Activated CD8-positive, alpha-beta T cell treated with anti-CD3 and anti-CD28 coated beads, Interleukin-2, amount 10 ng/mL, durations not matched to agents 7 days and 5 days (primary cell): ENCODE measurements at regions of chr17 and their contacts with region 1.

Region 1: DNA sequence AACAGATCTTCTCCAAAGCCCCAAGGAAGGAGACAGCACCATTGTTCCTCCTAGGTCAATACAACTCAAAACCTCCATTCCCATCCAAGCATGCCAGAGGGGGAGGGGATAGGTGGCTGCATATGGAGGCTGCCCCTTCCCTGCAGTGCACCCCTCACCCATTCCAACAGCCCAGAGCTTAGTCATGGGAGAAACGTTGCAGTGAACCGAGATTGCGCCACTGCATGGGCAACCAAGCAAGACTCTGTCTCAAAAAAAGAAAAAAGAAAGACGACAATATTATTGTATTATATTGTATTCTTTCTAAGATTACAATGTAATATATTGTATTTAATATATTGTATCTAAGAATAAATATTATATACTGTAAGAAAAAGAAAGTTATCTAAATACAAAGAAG is 36.4 kb upstream of the CD300E start:
- DNase-seq: no peak
- ATAC-seq: no peak
- H3K4me3 Mint-ChIP-seq: no peak overlapping the region
- H3K27ac Mint-ChIP-seq: no peak overlapping the region
- H3K4me1 Mint-ChIP-seq: peaks cover 5% of the 10 kb centered on the region
- H3K27me3 Mint-ChIP-seq: peaks cover 56% of the 10 kb centered on the region

Region 2: DNA sequence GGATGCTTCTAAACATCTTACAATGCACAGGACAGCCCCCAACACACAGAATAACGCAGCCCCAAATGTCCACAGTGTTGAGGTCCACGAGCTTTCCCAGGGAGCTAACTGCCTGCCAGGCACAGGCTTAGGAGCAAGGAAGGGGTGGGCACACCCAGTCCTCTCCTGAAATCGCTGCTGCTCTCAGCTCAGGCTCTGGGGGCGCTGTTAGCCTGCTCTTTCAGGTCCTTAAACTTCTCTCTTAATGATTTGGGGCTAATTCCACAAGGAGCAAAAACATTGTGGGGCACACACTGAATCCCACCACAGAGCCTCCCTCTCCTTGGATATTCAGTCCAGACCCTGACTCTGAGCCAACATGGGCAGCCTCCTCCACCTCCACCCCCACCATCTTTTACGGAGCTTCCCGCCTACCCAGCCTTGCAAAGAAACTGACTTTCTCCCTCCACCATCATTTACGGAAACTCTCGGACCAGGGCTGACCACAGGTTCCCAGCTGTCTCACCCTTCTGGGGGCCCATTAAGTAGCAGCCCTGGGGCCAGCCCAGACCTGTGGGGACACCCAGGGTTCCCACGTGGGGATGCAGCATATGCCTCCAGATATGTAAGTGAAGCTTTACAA is 93.7 kb before region 1 on chr17:
- CTCF ChIA-PET with region 1: interaction called, 16 read pairs
- POLR2A ChIA-PET with region 1: no interaction called
- DNase-seq: peak; percentile 53
- ATAC-seq: peak; percentile 66
- H3K4me3 Mint-ChIP-seq: no peak overlapping the region
- H3K27ac Mint-ChIP-seq: no peak overlapping the region
- H3K4me1 Mint-ChIP-seq: peaks cover 15% of the 10 kb centered on the region
- H3K27me3 Mint-ChIP-seq: peaks cover 36% of the 10 kb centered on the region

Region 3: DNA sequence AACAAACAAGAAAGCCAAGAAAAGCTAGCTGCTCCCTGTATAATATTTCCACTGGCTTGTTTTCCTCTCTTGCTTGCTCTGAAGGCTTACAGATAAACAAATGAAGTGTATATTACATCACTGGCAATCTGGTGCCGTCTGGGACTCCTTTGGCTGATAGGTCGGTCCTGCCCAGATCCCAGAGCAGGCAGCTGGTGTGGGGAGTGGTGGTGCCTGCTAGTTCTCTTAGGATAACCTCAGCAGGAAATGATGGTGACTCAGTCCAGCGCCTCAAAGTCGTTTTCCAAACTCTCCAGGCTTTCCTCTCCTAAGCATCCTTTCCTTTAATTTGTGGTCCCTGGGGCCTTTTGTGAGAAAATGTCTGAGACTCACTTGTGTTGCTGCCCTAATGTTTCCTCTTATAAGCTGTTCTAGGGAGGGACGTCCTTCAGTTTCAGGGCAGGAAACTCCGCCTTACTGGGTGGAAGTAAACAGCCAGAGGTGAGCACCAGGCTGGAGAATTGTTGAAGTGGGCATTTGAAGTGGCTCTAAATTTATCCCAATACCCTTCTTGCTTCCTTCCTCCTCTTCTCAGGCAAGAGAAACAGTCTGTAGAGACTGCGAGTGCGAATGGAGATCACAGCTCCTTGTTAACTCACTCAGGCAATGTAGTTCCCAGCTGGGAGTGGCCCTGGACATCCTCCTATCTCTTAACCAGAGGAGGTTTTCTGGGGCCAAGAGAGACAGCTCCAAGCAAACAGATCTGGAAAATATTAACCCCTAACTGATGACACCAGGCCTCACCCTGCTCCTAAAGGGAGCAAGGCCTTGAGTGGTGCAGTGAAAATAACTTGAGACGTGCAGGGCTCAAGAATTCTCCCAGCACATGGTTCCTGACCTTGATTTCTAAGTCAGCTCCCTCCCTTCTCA is 17.9 kb after region 1 on chr17:
- CTCF ChIA-PET with region 1: interaction called, 40 read pairs
- POLR2A ChIA-PET with region 1: no interaction called
- DNase-seq: peak; percentile 25
- ATAC-seq: no peak
- H3K4me3 Mint-ChIP-seq: no peak overlapping the region
- H3K27ac Mint-ChIP-seq: no peak overlapping the region
- H3K4me1 Mint-ChIP-seq: peaks cover 15% of the 10 kb centered on the region
- H3K27me3 Mint-ChIP-seq: peaks cover 44% of the 10 kb centered on the region

Region 4: DNA sequence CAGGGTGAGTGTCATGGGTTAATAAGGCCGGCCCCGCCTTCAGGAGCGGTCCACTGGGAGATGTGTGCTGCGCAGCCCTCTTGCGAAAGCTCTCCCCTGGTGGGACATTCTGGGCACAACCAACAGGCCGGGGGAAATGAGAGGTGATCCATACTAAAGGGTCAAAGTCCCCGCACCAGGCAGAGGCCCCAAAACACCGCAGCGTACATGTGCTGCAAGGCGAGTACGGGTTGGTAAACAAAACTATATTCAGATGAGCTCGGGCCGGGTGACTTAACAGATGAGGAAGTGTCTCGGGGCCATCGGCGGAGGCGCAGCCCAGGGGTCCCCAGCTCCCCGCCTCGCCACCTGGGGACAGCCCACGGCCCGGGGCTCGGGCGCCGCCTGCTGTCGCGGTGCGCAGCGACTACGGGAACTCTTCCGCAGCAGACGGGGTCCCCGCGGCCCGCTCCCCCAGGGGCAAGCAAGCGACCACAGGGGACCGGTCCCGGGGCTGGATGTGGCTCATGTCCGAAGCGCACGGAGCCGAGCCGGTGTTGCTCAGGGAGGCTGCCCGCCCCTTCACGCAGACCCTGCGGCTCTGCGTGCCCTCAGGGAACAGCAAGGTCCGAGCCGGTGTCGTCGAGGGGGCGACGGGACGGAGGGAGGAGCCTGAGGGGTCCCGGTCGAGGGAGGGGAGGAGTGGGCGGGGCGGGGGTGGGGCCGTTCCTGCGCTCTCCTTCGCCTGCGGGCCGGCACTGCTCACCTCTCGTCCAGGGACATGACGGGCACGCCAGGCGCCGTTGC is 76.8 kb after region 1 on chr17 and contains the start of gene RAB37:
- CTCF ChIA-PET with region 1: interaction called, 284 read pairs
- POLR2A ChIA-PET with region 1: interaction called, 14 read pairs
- DNase-seq: peak; percentile 57
- ATAC-seq: peak; percentile 20
- H3K4me3 Mint-ChIP-seq: peak within 1 kb of the TSS; percentile 85
- H3K27ac Mint-ChIP-seq: peak within 1 kb of the TSS; percentile 90
- H3K4me1 Mint-ChIP-seq: peaks cover 51% of the 10 kb centered on the region
- H3K27me3 Mint-ChIP-seq: peaks cover 11% of the 10 kb centered on the region
- total RNA-seq, gene RAB37: 19.1 to 19.6 TPM

Region 5: GRCh38 chr17:74759243-74759801 is 99.4 kb after region 1 on chr17:
- CTCF ChIA-PET with region 1: interaction called, 43 read pairs
- POLR2A ChIA-PET with region 1: no interaction called
- DNase-seq: peak; percentile 82
- ATAC-seq: peak; percentile 90
- H3K4me3 Mint-ChIP-seq: peak overlapping the region; percentile 69
- H3K27ac Mint-ChIP-seq: peak overlapping the region; percentile 91
- H3K4me1 Mint-ChIP-seq: peaks cover 70% of the 10 kb centered on the region
- H3K27me3 Mint-ChIP-seq: no peaks in the 10 kb centered on the region

Region 6: GRCh38 chr17:74785096-74785980 is 125.4 kb after region 1 on chr17:
- CTCF ChIA-PET with region 1: interaction called, 36 read pairs
- POLR2A ChIA-PET with region 1: no interaction called
- DNase-seq: no peak
- ATAC-seq: peak; percentile 31
- H3K4me3 Mint-ChIP-seq: no peak overlapping the region
- H3K27ac Mint-ChIP-seq: peak overlapping the region; percentile 80
- H3K4me1 Mint-ChIP-seq: peaks cover 71% of the 10 kb centered on the region
- H3K27me3 Mint-ChIP-seq: no peaks in the 10 kb centered on the region

Region 7: GRCh38 chr17:74873038-74873873 is 213.4 kb after region 1 on chr17:
- CTCF ChIA-PET with region 1: interaction called, 12 read pairs
- POLR2A ChIA-PET with region 1: no interaction called
- DNase-seq: peak; percentile 100
- ATAC-seq: peak; percentile 97
- H3K4me3 Mint-ChIP-seq: peak overlapping the region; percentile 82
- H3K27ac Mint-ChIP-seq: peak overlapping the region; percentile 83
- H3K4me1 Mint-ChIP-seq: peaks cover 33% of the 10 kb centered on the region
- H3K27me3 Mint-ChIP-seq: no peaks in the 10 kb centered on the region